Activated T-helper 2 cell treated with anti-CD3 and anti-CD28 coated beads, Interferon-gamma antibody, Interleukin-2, Interleukin-4, amounts not matched to agents 10 μg/mL and 5 μg/mL and 100 μg/mL, durations not matched to agents 14 hours and 24 hours and 36 hours (primary cell): ENCODE measurements at regions of chr1 and their contacts with region 1.

Region 1: DNA sequence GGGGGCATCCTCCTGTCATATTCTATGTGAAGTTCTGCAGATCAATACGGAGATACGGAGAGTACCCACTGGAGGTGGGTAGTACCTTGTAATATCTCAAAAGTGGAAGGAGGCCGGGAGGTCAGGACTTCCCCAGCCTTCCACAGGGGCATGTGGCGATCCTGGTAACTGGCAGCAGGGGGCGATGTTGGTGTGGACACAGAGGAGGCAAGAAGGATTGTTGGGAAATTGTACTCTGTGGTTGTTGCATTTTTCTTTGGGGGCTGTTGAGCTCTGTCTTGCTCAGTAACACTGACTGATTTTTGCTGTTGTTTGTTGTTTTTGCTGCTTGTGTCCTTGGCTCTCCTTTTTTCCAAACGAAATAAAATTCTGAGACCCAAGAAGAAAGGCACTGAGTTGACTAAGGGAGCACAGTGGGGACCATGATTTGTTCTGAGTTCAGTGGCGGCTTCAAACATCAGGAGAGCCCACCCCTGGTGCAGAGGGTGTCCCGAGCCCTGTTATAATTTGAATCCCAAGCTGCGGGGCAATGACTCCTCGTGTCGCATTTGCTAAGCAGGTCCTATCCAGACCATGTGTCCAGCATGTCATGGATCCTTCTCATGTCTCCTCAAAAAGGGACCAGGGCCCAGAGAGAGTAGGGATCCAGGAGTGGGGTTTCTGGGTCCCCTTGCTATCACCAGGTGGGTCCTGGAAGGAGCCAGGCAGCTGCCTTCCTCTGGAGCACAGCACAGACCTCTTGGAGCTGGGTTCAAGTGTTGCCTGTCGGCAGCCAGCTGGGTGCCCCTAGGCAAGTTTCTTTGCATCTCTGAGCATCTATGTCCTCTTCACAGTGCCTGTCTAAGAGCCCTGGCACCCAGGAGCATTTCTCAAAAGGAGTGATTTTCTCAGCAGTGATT is 22.8 kb downstream of the LHX4 start:
- DNase-seq: peak; percentile 55
- H3K4me3 Mint-ChIP-seq: no peak overlapping the region
- H3K27ac Mint-ChIP-seq: no peak overlapping the region
- H3K4me1 Mint-ChIP-seq: no peaks in the 10 kb centered on the region
- H3K27me3 Mint-ChIP-seq: peaks cover 4% of the 10 kb centered on the region

Region 2: DNA sequence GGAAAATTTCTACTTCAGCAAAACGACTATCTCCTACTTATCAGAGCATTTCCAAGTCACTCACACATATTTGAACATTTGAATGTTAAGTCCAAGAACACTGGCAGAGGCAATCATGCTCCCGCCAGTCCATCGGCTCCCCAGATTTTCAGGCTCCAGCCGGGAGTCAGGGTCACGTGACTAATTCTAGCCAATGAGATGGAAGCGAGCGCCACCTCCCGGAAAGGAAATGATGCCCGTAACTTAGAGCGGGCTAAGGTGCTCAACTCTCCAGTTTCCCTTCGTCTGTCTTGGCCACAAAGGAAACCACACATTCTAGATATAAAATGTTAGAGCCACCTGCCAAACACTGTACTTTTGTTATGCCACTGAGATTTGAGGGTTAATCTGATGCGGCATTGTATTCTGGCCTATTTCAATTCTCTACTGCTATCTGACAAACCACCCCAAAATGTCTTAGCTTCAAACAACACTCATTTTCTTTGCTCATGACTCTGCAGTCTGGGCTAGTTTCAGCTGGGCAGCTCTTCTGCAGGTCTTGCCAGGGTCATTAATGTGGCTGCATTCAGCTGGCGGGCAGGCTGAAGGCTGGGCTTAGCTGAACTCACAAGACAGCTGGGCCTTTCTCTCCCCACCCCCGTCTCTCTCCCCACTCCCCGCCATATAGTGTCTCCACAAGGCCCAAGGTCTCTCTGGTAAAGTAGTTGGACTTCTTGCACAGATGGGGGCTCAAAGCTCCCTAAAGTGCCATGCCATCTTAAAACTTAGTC is 39.3 kb before region 1 on chr1:
- intact Hi-C with region 1: no loop called
- DNase-seq: peak; percentile 50
- H3K4me3 Mint-ChIP-seq: no peak overlapping the region
- H3K27ac Mint-ChIP-seq: no peak overlapping the region
- H3K4me1 Mint-ChIP-seq: peaks cover 10% of the 10 kb centered on the region
- H3K27me3 Mint-ChIP-seq: peaks cover 11% of the 10 kb centered on the region

Region 3: DNA sequence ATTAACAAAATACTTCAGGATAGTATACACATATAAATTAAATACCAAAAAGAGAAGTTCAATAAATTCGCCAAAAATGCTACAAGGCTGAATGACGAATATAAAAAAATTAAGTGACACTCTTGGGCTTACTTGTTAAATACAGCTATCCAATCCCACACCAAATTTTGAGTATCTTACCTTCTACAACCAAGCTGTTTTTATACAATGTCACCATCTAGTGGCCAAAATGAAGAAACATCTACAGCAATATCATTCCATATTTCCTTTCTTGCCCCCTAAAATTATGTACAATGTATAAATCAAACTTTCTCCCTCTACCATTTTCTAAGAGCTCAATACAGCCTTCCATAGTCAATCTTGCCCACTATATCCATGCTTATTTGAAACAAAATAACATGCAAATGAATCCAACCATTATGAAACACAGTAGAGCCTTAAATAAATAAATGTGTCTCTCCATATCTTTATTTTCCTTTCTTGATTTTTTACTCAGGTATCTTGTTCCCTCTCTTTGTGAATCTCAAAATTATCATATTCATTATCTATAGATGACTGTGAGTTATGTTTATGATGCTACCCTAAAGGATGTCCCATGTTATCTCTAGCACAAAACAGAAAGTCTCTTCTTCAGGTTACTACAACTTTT is 163.2 kb after region 1 on chr1:
- intact Hi-C with region 1: loop called (anchors 1 kb)
- DNase-seq: no peak
- H3K4me3 Mint-ChIP-seq: no peak overlapping the region
- H3K27ac Mint-ChIP-seq: no peak overlapping the region
- H3K4me1 Mint-ChIP-seq: no peaks in the 10 kb centered on the region
- H3K27me3 Mint-ChIP-seq: no peaks in the 10 kb centered on the region

Region 4: GRCh38 chr1:180482425-180483275 is 229.8 kb after region 1 on chr1:
- intact Hi-C with region 1: loop called (anchors 1 kb)
- DNase-seq: no peak
- H3K4me3 Mint-ChIP-seq: no peak overlapping the region
- H3K27ac Mint-ChIP-seq: no peak overlapping the region
- H3K4me1 Mint-ChIP-seq: peaks cover 14% of the 10 kb centered on the region
- H3K27me3 Mint-ChIP-seq: no peaks in the 10 kb centered on the region